ENCODE measurements at regions of chr4 and their contacts with region 1.

Region 1: GRCh38 chr4:38768968-38769394 is 13.8 kb downstream of the TLR10 start:
- DNase-seq: no peak
- ATAC-seq: no peak
- H3K4me3 ChIP-seq: no peak overlapping the region
- H3K27ac ChIP-seq: no peak overlapping the region
- H3K4me1 ChIP-seq: no peaks in the 10 kb centered on the region
- H3K27me3 ChIP-seq: peaks cover 7 to 18% of the 10 kb centered on the region in 2 experiments; a peak in 3 of 5 replicates
- CTCF ChIP-seq: no peak
- EP300 ChIP-seq: no peak
- POLR2A ChIP-seq: no peak
- RAD21 ChIP-seq: no peak

Region 2: DNA sequence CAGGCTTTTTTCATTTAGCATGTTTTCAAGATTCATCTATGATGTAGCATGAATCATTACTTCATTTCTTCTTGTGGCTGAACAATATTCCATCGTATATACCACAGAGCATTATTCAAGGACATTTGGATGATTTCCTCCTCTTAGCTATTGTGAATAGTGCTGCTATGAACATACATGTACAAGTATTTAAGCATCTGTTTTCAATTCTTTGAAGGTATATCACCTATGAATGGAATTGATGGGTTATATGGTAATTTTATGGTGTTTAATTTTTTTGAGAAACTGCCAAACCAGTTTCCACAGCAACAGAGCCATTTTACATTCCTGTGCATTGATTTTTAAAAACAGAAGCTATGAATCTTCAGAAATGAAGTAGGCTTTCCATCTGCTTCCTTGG is 377.2 kb after region 1 on chr4:
- CTCF ChIA-PET with region 1: no interaction called
- POLR2A ChIA-PET with region 1: no interaction called
- in situ Hi-C with region 1: loop called (anchors 10 kb)
- intact Hi-C with region 1: no loop called
- DNase-seq: no peak
- ATAC-seq: no peak
- H3K4me3 ChIP-seq: no peak overlapping the region
- H3K27ac ChIP-seq: no peak overlapping the region
- H3K4me1 ChIP-seq: no peaks in the 10 kb centered on the region
- H3K27me3 ChIP-seq: peaks cover 0 to 3% of the 10 kb centered on the region in 2 experiments; a peak in 1 of 5 replicates
- CTCF ChIP-seq: no peak
- EP300 ChIP-seq: no peak
- POLR2A ChIP-seq: no peak
- RAD21 ChIP-seq: no peak

Measured in K562 (cell line).